Mammary epithelial cell (primary cell): ENCODE measurements at regions of chr22 and their contacts with region 1.

Region 1: DNA sequence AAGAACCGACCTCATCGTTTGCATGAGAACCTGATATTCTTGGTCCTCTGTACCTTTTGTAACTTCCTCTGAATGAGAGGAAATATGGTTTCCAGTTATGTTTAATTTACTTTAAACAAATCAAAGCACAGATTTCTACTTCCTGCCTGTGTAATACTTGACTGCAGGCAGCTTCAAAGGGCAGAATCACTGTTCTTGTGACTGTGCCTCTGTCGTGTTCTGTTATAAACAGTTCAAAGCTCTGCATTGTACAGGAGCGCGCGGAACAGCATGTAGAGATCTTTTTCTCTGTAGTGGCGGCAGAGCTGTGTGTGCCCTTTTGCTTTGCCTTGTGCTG is 73.2 kb upstream of the CLDN5 start:
- DNase-seq: no peak
- H3K4me3 ChIP-seq: no peak overlapping the region
- H3K27ac ChIP-seq: no peak overlapping the region
- H3K4me1 ChIP-seq: peaks cover 18% of the 10 kb centered on the region
- H3K27me3 ChIP-seq: no peaks in the 10 kb centered on the region
- CTCF ChIP-seq: no peak

Region 2: GRCh38 chr22:19576460-19577421 is 20.6 kb before region 1 on chr22:
- CTCF ChIA-PET with region 1: no interaction called
- dilution Hi-C with region 1: no loop called
- in situ Hi-C with region 1: no loop called
- intact Hi-C with region 1: loop called (anchors 2 kb)
- DNase-seq: peak; percentile 83
- H3K4me3 ChIP-seq: no peak overlapping the region
- H3K27ac ChIP-seq: peak overlapping the region; percentile 65
- H3K4me1 ChIP-seq: peaks cover 38% of the 10 kb centered on the region
- H3K27me3 ChIP-seq: no peaks in the 10 kb centered on the region
- CTCF ChIP-seq: no peak

Region 3: DNA sequence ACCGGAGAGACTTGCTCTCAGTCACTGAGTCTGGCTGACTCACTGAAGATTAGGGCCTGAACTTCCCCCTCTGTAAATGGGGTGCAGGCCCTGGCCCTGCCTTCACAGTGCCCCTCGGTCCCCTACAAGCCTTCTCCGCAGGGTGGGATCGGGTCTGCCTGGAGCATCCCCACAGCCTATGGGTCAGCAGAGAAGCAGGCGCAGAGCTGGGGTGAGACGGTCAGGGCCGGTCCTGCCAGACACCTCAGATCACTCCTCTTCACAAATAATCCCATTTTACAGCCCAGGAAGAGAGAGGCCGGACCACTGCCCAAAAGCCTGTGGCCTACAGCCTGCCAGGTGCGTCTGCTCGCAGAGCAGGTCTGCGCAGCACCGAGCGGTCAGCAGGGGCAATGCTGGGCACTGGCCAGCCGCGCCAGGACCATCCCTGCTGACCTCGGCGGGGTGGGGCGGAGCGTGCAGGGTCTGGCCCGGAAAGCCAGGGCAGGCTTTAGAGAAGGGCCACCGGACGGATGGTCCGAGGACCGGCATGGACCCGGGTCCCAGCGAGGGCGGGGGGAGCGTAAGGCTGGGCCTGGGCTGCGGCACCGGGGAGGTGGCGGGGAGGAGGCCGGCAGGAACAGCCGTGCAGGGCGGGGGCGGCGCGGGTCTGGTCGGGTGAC is 116.4 kb after region 1 on chr22:
- CTCF ChIA-PET with region 1: no interaction called
- dilution Hi-C with region 1: no loop called
- in situ Hi-C with region 1: no loop called
- intact Hi-C with region 1: no loop called
- DNase-seq: no peak
- H3K4me3 ChIP-seq: peak overlapping the region in 2 of 3 experiments; percentile 46 to 59
- H3K27ac ChIP-seq: no peak overlapping the region
- H3K4me1 ChIP-seq: peaks cover 24% of the 10 kb centered on the region
- H3K27me3 ChIP-seq: no peaks in the 10 kb centered on the region
- CTCF ChIP-seq: no peak

Region 4: DNA sequence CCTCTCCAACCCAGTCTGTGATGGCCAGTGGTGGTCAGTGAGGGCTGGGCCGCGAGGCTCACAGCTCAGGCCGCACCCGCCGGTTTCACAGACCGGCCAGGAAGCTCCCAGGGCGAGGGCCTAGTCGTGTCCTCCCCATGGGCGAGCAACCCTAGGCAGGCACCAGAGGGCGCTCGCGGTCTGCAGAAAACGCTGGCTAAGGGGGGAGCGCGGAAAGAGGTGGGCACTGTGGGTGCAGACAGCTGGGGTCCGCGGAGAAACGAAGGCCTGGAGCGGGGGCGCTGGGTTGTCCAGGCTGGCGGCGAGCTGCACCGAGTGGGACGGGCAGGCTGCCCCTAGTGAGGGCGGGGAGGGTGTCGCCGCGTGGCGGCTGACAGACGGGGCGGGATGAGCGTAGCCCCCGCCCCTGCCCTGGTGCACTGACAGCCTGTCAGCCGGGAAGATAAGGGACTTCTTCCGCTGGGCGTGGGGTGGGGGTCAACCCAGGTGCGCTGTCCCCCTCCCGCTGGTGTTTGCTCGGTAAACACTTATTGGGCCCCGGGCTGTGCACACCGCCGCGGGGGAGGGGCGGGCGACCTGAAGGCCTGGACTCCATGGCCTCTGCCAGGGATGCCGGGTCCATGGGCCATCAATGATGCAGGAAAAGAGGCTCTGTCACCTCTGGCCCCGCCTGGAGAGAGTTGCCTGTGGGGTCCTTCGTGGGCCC is 133.4 kb after region 1 on chr22:
- CTCF ChIA-PET with region 1: no interaction called
- dilution Hi-C with region 1: no loop called
- in situ Hi-C with region 1: no loop called
- intact Hi-C with region 1: no loop called
- DNase-seq: peak; percentile 48
- H3K4me3 ChIP-seq: peak overlapping the region; percentile 24 to 48 (median 44)
- H3K27ac ChIP-seq: no peak overlapping the region
- H3K4me1 ChIP-seq: no peaks in the 10 kb centered on the region
- H3K27me3 ChIP-seq: no peaks in the 10 kb centered on the region
- CTCF ChIP-seq: peak; percentile 80 to 96